HEK293T (cell line): ENCODE measurements at regions of chr14 and their contacts with region 1.

Region 1: GRCh38 chr14:24135834-24136542 is at the start of gene PSME1:
- DNase-seq: peak; percentile 91

Region 2: DNA sequence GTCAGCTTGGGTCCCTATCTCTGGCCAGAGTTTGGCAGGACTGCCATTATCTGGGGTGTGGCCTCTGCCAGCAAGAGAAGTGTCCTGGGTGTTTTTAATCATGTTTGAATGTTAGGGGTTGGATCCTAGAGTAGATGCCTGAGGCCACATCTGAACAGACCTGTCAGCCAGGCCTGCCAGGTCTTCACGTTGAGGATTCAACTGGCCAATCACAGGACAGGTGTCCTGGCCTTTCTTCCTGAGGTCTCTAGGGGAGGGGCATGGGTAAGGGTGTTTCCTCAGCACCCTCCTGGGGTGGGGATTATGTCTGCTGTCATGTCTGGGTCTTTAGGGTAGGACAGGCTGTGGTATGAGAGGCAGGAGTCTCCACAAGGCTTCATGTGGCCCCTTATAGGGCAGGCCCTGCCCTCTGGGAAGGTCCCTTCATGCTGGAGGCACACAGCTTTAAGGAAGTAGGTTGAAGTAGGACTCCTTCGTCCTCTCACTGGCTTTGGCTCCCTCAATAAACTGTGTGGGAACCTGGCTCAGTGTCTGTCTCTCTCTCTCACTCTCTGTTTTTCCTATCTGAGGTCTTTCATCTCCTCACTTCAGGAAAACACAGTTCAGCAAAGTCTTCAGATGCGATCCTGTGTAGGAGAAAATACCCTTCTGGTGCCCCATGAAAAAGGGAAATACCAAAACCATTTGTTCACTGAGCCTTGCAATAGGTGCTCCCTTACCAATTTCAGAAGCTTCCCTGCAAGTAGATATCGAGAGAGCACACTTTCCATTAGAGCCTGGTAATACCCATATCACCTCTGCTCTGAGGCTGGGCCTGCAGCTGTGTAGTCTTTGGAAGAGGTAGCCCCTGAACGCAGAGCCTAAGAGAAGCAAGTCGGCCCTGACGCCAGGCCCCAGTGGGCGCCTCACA is 12.2 kb before region 1 on chr14:
- CTCF ChIA-PET with region 1: no interaction called
- POLR2A ChIA-PET with region 1: interaction called, 24 read pairs
- DNase-seq: no peak